Tibial artery (tissue), 4 donors: ENCODE measurements at regions of chr18 and their contacts with region 1.

Region 1: DNA sequence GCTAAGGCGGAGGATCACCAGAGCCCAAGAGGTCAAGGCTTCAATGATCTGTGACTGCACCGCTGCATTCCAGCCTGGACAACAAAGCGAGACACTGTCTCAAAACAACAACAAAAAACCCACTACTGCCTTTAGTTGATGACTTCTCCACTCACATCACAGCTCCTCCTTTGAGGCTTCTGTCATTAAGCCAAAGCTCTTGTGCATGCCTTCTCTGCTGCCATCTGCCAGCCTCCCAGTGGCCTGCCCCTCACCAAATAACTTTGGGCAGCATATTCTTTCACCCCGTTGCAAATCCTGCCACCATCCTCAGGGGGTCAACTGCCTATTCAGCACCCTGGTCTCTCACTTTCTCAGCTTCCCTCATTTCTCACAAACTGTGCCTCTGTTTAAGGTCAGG is 27.5 kb downstream of the OSBPL1A start:
- DNase-seq: no peak
- H3K4me3 ChIP-seq: no peak overlapping the region
- H3K27ac ChIP-seq: no peak overlapping the region
- H3K4me1 ChIP-seq: no peaks in the 10 kb centered on the region
- H3K27me3 ChIP-seq: no peaks in the 10 kb centered on the region
- CTCF ChIP-seq: no peak

Region 2: GRCh38 chr18:24432618-24433017 is 62.5 kb after region 1 on chr18:
- intact Hi-C with region 1: loop called (anchors 10 kb)
- DNase-seq: no peak
- H3K4me3 ChIP-seq: no peak overlapping the region
- H3K27ac ChIP-seq: no peak overlapping the region
- H3K4me1 ChIP-seq: peaks cover 0 to 9% (median 1%) of the 10 kb centered on the region in 4 donors
- H3K27me3 ChIP-seq: no peaks in the 10 kb centered on the region
- CTCF ChIP-seq: no peak